Activated CD8-positive, alpha-beta T cell treated with anti-CD3 and anti-CD28 coated beads, Interleukin-2, amount 10 ng/mL, durations not matched to agents 7 days and 5 days (primary cell): ENCODE measurements at regions of chr10 and their contacts with region 1.

Region 1: GRCh38 chr10:67788025-67788886 is 49.7 kb downstream of the DNAJC12 start:
- DNase-seq: peak; percentile 84
- ATAC-seq: peak; percentile 46
- H3K4me3 Mint-ChIP-seq: peak overlapping the region; percentile 23
- H3K27ac Mint-ChIP-seq: peak overlapping the region; percentile 3
- H3K4me1 Mint-ChIP-seq: peaks cover 60% of the 10 kb centered on the region
- H3K27me3 Mint-ChIP-seq: no peaks in the 10 kb centered on the region

Region 2: DNA sequence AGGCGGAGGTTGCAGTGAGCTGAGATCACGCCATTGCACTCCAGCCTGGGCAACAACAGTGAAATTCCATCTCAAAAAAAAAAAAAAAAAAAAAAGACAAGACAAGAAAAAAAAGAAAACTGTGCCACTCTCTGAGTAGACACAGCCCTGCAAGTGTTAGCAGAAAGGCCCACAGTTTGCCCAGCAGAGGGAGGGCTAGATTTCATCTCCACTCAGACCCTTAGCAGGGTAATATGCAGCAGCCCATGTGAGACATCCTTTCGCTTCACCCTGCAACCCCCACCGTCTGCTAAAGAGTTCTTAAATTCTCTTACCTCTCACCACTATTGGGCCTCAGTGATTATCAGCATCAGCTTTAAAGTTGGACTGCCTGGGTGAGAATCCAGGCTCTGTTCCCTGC is 130.5 kb before region 1 on chr10:
- CTCF ChIA-PET with region 1: no interaction called
- POLR2A ChIA-PET with region 1: no interaction called
- DNase-seq: no peak
- ATAC-seq: no peak
- H3K4me3 Mint-ChIP-seq: no peak overlapping the region
- H3K27ac Mint-ChIP-seq: no peak overlapping the region
- H3K4me1 Mint-ChIP-seq: no peaks in the 10 kb centered on the region
- H3K27me3 Mint-ChIP-seq: peaks cover 16% of the 10 kb centered on the region

Region 3: DNA sequence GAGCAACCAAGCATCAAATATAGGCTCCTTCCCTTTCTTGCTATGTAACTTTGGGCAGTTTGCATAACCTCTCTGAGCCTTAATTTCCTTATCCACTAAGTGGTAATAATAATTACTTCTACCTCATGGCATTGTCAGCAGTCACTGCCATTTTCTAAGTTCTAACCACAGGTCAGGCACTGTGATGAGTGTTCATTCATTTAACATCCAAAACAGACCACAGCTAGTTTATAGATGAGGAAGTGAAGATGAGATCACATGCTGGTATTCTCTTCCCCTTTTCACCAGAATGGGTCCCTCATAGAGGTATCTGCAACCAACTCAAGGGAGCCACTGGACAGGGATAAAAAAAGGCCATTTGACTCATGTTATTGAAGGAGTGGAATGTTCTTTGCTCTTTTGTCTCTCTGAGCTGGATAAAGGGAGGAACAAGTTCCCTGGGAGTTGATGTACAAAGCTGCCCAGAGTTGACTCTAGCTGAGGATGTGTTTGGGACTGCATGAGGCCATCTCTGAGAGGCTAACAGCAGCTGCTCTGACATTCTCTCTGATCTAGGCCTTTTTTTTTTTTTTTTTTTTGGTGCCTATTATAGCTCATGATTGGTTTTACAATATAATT is 15.3 kb before region 1 on chr10:
- CTCF ChIA-PET with region 1: interaction called, 32 read pairs
- POLR2A ChIA-PET with region 1: interaction called, 7 read pairs
- DNase-seq: no peak
- ATAC-seq: peak; percentile 61
- H3K4me3 Mint-ChIP-seq: no peak overlapping the region
- H3K27ac Mint-ChIP-seq: peak overlapping the region; percentile 46
- H3K4me1 Mint-ChIP-seq: peaks cover 54% of the 10 kb centered on the region
- H3K27me3 Mint-ChIP-seq: no peaks in the 10 kb centered on the region

Region 4: GRCh38 chr10:67815571-67816059 is 27.4 kb after region 1 on chr10:
- CTCF ChIA-PET with region 1: interaction called, 46 read pairs
- POLR2A ChIA-PET with region 1: no interaction called
- DNase-seq: no peak
- ATAC-seq: no peak
- H3K4me3 Mint-ChIP-seq: no peak overlapping the region
- H3K27ac Mint-ChIP-seq: no peak overlapping the region
- H3K4me1 Mint-ChIP-seq: peaks cover 8% of the 10 kb centered on the region
- H3K27me3 Mint-ChIP-seq: no peaks in the 10 kb centered on the region

Region 5: DNA sequence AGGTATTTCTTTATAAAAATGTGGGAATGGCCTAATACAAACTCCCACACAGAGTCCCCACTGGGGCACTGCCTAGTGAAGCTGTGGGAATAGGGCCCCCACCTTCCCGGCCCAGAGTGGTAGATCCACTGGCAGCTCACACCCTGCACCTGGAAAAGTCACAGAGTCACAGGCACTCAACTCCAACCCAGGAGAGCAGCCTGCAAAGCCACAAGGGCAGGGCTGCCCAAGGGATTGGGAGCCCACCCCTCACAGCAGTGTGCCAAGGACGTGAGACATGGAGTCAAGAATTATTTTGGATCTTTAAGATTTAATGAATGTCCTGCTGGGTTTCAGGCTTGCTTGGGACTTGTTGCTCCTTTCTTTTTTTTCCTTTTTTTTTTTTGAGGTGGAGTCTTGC is 55.0 kb after region 1 on chr10:
- CTCF ChIA-PET with region 1: interaction called, 16 read pairs
- POLR2A ChIA-PET with region 1: interaction called, 7 read pairs
- DNase-seq: no peak
- ATAC-seq: no peak
- H3K4me3 Mint-ChIP-seq: no peak overlapping the region
- H3K27ac Mint-ChIP-seq: no peak overlapping the region
- H3K4me1 Mint-ChIP-seq: no peaks in the 10 kb centered on the region
- H3K27me3 Mint-ChIP-seq: no peaks in the 10 kb centered on the region

Region 6: GRCh38 chr10:67884313-67884841 is 96.1 kb after region 1 on chr10 and contains the start of gene SIRT1:
- CTCF ChIA-PET with region 1: interaction called, 12 read pairs
- POLR2A ChIA-PET with region 1: interaction called, 5 read pairs
- DNase-seq: peak; percentile 94
- ATAC-seq: peak; percentile 85
- H3K4me3 Mint-ChIP-seq: peak within 1 kb of the TSS; percentile 93
- H3K27ac Mint-ChIP-seq: peak within 1 kb of the TSS; percentile 93
- H3K4me1 Mint-ChIP-seq: peaks cover 31% of the 10 kb centered on the region
- H3K27me3 Mint-ChIP-seq: no peaks in the 10 kb centered on the region
- total RNA-seq, gene SIRT1: 21.9 TPM

Region 7: GRCh38 chr10:68301790-68302502 is 513.7 kb after region 1 on chr10:
- CTCF ChIA-PET with region 1: interaction called, 26 read pairs
- POLR2A ChIA-PET with region 1: no interaction called
- DNase-seq: no peak
- ATAC-seq: peak; percentile 49
- H3K4me3 Mint-ChIP-seq: no peak overlapping the region
- H3K27ac Mint-ChIP-seq: no peak overlapping the region
- H3K4me1 Mint-ChIP-seq: no peaks in the 10 kb centered on the region
- H3K27me3 Mint-ChIP-seq: no peaks in the 10 kb centered on the region